Posterior cingulate gyrus (tissue), 11 donors: ENCODE measurements at regions of chr12 and their contacts with region 1.

Region 1: DNA sequence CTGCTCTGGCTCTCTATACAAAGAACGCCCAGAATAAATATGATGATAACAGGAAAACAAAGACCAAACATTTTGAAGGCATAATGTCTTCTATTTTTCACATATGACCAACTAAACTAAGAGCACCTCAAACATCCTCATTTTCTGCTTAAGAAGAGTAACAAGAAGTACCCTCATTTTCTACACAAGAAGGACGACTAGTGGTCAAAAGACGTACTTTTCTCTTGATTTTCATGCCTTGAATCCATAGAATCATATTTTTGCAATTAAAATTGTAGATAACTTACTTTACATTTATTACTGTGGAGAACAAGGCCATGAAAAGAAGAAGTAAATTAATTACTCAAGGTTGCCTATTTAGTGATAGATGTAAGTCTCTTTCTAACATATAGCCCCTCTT is 358.6 kb downstream of the DUSP6 start:
- DNase-seq: no peak

Region 2: GRCh38 chr12:88111074-88111652 is 882.5 kb before region 1 on chr12:
- intact Hi-C with region 1: loop called (anchors 10 kb)
- DNase-seq: no peak

Region 3: GRCh38 chr12:88897723-88898122 is 95.9 kb before region 1 on chr12:
- intact Hi-C with region 1: loop called (anchors 10 kb)
- DNase-seq: no peak